Transverse colon (tissue), 4 donors: ENCODE measurements at regions of chr9 and their contacts with region 1.

Region 1: DNA sequence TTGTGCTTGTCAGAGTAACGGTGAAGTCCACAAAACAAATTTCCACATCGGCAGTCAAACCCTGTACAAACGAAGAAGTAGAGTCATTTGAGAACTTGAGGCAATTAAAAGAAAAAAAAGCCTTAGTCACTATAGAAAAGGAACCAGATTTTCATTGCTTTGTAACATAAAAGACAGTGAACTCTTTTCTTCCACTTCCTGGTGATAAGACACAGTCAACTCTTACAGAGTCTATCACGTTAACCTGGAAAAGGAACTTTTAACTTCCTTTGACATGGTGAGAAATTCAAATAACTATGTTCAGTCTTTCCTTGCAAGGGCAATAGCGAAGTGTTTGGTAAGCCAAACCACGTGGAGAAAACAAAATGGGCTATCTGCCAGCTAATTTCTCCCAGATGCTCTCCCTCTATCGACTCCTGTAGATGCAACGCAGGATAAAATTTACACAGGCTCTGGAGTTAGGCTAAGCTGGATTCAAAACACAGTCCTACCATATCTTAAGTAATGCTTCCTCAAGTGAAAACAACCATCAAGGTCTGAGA is 8.9 kb downstream of the ZFAND5 start:
- DNase-seq: no peak
- H3K4me3 ChIP-seq: no peak overlapping the region
- H3K27ac ChIP-seq: peak overlapping the region; percentile 23 to 72 (median 68)
- H3K4me1 ChIP-seq: peaks cover 21 to 79% (median 72%) of the 10 kb centered on the region in 4 donors
- H3K27me3 ChIP-seq: no peaks in the 10 kb centered on the region
- CTCF ChIP-seq: no peak
- EP300 ChIP-seq: no peak
- POLR2A ChIP-seq: no peak

Region 2: DNA sequence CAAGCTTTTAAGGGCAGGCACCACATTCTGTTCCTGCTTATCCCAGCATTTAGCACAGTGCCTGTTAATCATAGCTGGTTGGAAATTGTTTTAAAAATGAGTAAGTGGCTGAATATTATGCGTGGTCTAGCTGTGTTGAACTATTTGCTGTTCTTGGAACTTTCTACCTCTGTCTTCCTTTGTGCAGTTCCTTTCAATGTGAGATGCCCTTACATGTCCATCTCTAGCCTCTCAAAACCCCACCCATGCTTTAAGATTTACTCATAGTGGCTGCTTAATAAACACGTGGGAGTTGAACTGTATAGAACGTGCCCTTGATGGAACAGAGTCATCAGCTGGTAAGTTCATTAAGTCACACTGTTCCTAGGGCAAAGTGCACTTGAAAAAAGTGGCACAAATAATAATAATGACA is 330.2 kb before region 1 on chr9:
- in situ Hi-C with region 1: no loop called
- intact Hi-C with region 1: no loop called
- DNase-seq: no peak
- H3K4me3 ChIP-seq: no peak overlapping the region
- H3K27ac ChIP-seq: peak overlapping the region; percentile 42 to 81 (median 63)
- H3K4me1 ChIP-seq: peaks cover 0 to 7% (median 3%) of the 10 kb centered on the region in 4 donors
- H3K27me3 ChIP-seq: no peaks in the 10 kb centered on the region
- CTCF ChIP-seq: no peak
- EP300 ChIP-seq: no peak
- POLR2A ChIP-seq: no peak

Region 3: GRCh38 chr9:72305102-72305546 is 51.0 kb before region 1 on chr9:
- in situ Hi-C with region 1: loop called in 1 of 4 experiments (anchors 10 kb)
- intact Hi-C with region 1: no loop called
- DNase-seq: peak; percentile 89
- H3K4me3 ChIP-seq: peak overlapping the region in 2 of 4 donors; percentile 36 to 44
- H3K27ac ChIP-seq: peak overlapping the region; percentile 79 to 92 (median 88)
- H3K4me1 ChIP-seq: peaks cover 8 to 24% (median 20%) of the 10 kb centered on the region in 4 donors
- H3K27me3 ChIP-seq: no peaks in the 10 kb centered on the region
- CTCF ChIP-seq: no peak
- EP300 ChIP-seq: no peak
- POLR2A ChIP-seq: peak; percentile 96

Region 4: GRCh38 chr9:72526901-72527800 is 171.0 kb after region 1 on chr9:
- in situ Hi-C with region 1: no loop called
- intact Hi-C with region 1: no loop called
- DNase-seq: peak; percentile 71
- H3K4me3 ChIP-seq: peak overlapping the region in 3 of 4 donors; percentile 11 to 32 (median 11)
- H3K27ac ChIP-seq: peak overlapping the region; percentile 65 to 78 (median 68)
- H3K4me1 ChIP-seq: peaks cover 8 to 34% (median 12%) of the 10 kb centered on the region in 4 donors
- H3K27me3 ChIP-seq: no peaks in the 10 kb centered on the region
- CTCF ChIP-seq: peak in 1 of 5 experiments; percentile 14
- EP300 ChIP-seq: peak; percentile 32
- POLR2A ChIP-seq: peak; percentile 49